Right ventricle myocardium inferior (tissue), 1 donor: ENCODE measurements at regions of chr10 and their contacts with region 1.

Region 1: DNA sequence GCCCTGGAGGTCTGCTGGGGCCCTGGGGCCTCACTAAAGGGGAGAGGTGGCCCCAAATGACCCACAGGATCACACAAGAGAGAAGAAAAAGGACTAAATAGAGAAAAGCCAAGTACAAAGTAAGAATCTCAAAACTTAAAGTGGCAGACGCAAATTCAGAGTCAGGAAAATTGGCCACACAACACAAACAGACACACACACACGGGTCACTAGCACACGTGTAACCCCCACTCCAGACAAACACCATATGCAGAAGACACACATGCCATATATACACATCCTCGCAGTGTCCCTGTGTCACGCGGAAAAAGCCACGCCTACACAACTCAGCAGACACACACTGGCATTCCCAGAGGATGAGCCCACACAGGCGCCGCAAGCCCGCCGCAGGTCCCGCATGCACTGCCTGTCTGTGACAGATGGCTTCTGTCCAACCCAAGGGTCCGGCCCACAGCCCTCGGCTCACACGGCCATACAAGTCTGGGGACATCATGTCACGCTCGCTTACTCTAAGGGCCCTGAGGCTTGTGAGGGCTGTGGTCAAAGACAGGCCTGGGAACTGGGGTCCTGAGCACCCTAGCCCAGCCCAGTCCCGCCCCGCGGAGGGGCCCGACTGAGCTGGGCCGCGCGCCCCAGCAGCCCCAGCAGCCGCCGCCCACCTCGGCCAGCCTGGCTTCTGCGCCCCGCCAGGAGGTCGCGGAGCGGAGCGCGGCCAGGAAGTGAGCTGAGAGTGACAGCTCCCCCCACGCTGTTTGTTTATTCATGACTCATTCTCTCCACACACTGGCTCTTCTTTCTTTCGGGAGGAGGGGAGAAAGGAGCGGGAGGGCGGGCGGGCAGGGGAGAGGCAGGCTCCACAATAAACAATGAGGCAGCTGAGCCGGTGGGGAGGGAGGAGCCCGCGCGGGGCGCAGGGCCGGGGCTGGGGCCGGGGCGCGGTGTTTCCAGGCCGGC is 95.5 kb upstream of the ZMIZ1 start:
- DNase-seq: peak; percentile 85
- ATAC-seq: peak; percentile 72

Region 2: DNA sequence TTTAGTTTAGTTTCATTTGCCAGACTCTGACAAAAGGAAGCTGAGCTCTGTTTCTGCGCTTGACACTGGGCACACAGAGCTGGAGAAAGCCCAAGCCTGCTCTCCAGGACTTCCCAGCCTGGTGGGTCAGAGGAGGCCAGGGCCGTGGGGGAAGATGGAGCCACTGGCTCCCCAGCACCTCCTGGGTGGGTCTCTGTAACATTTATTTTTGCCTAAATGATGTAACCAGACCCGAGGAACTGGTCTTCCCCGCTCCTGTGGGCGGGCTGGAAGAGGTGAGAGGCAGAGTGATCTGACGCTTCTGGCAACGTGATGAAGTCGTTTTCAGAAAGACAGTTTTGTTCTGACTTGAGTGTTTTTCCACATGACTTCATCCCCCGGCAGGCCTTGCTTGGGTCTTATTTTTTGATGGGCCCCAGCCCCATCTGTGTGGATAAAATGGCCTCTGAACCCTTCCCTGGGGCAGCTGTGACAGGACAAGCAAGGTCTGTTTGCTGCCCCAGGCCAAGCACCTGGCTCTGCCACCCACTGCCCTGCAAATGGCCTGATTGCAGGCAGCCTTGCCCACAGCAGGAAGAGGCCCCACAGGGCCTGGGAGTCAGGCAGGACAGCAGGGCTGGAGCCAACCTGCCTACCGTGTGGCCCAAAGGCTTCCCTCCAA is 209.4 kb before region 1 on chr10:
- intact Hi-C with region 1: no loop called
- DNase-seq: no peak
- ATAC-seq: peak; percentile 72

Region 3: GRCh38 chr10:78805176-78805575 is 168.0 kb before region 1 on chr10:
- intact Hi-C with region 1: loop called (anchors 5 kb)
- DNase-seq: peak; percentile 87
- ATAC-seq: peak; percentile 93